ENCODE measurements at regions of chr1 and their contacts with region 1.

Region 1: GRCh38 chr1:230957580-230957989 is 21.1 kb downstream of the TTC13 start:
- DNase-seq: no peak
- H3K4me3 ChIP-seq: no peak overlapping the region
- H3K27ac ChIP-seq: no peak overlapping the region
- H3K4me1 ChIP-seq: peaks cover 14% of the 10 kb centered on the region
- CTCF ChIP-seq: no peak

Region 2: GRCh38 chr1:230517786-230518185 is 439.8 kb before region 1 on chr1:
- CTCF ChIA-PET with region 1: no interaction called
- POLR2A ChIA-PET with region 1: no interaction called
- intact Hi-C with region 1: no loop called
- DNase-seq: no peak
- H3K4me3 ChIP-seq: no peak overlapping the region
- H3K27ac ChIP-seq: no peak overlapping the region
- H3K4me1 ChIP-seq: no peaks in the 10 kb centered on the region
- CTCF ChIP-seq: no peak

Region 3: DNA sequence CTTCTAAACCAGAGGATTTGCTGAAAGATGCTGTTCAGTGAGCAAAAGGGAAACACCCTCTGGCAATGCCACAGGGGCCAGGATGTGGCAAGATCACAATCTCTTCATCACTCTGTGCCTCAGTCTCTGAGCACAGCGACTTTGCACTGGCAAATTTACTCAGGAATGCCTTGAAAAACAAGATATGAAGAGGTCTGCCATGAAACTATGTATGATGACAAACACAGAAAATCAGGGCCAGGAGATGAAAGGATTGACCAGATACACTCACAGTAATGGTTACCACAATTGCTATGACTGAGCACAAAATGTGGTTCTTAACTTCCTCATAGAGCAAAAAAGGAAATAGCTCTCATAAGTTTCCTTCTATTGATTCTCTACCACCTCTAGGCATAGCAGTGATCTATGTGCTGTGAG is 15.3 kb after region 1 on chr1:
- CTCF ChIA-PET with region 1: no interaction called
- POLR2A ChIA-PET with region 1: interaction called, 26 read pairs
- intact Hi-C with region 1: no loop called
- DNase-seq: peak; percentile 29
- H3K4me3 ChIP-seq: no peak overlapping the region
- H3K27ac ChIP-seq: no peak overlapping the region
- H3K4me1 ChIP-seq: peaks cover 17% of the 10 kb centered on the region
- CTCF ChIP-seq: no peak

Region 4: GRCh38 chr1:231162297-231162969 is 204.8 kb after region 1 on chr1:
- CTCF ChIA-PET with region 1: no interaction called
- POLR2A ChIA-PET with region 1: no interaction called
- intact Hi-C with region 1: no loop called
- DNase-seq: no peak
- H3K4me3 ChIP-seq: no peak overlapping the region
- H3K27ac ChIP-seq: no peak overlapping the region
- H3K4me1 ChIP-seq: no peaks in the 10 kb centered on the region
- CTCF ChIP-seq: no peak

Region 5: GRCh38 chr1:231949277-231950091 is 991.9 kb after region 1 on chr1:
- CTCF ChIA-PET with region 1: no interaction called
- POLR2A ChIA-PET with region 1: no interaction called
- intact Hi-C with region 1: no loop called
- DNase-seq: no peak
- H3K4me3 ChIP-seq: no peak overlapping the region
- H3K27ac ChIP-seq: no peak overlapping the region
- H3K4me1 ChIP-seq: no peaks in the 10 kb centered on the region
- CTCF ChIP-seq: no peak